ENCODE measurements at regions of chr4 and their contacts with region 1.

Region 1: GRCh38 chr4:47122592-47123291 is 91.4 kb downstream of the GABRB1 start:
- DNase-seq: peak; percentile 4
- H3K4me3 ChIP-seq: no peak overlapping the region
- H3K27me3 ChIP-seq: no peaks in the 10 kb centered on the region
- CTCF ChIP-seq: peak; percentile 93

Region 2: GRCh38 chr4:47088298-47088697 is 34.4 kb before region 1 on chr4:
- CTCF ChIA-PET with region 1: no interaction called
- POLR2A ChIA-PET with region 1: no interaction called
- DNase-seq: no peak
- H3K4me3 ChIP-seq: no peak overlapping the region
- H3K27me3 ChIP-seq: no peaks in the 10 kb centered on the region; the same call in 1 of the 2 replicates
- CTCF ChIP-seq: no peak

Region 3: DNA sequence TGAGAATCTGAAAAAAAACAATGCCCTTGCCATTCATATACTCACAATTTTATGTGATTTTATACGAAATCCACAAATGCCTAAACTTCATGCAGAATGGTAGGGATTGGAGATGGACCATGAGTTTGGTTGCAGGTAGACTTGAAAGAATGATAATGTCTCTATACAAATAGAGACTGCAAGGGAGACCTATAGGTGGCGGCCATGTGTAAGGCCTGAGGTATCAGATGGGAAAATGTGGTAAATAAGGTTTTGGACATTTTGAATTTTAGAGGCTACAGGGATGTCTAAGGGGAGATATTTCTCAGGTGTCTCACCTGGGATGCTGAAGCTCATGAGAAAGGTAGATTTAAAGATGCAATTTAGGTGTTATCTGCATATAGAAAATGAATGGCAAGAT is 13.4 kb before region 1 on chr4:
- CTCF ChIA-PET with region 1: interaction called, 23 read pairs
- POLR2A ChIA-PET with region 1: no interaction called
- DNase-seq: no peak
- H3K4me3 ChIP-seq: no peak overlapping the region
- H3K27me3 ChIP-seq: no peaks in the 10 kb centered on the region
- CTCF ChIP-seq: no peak

Region 4: DNA sequence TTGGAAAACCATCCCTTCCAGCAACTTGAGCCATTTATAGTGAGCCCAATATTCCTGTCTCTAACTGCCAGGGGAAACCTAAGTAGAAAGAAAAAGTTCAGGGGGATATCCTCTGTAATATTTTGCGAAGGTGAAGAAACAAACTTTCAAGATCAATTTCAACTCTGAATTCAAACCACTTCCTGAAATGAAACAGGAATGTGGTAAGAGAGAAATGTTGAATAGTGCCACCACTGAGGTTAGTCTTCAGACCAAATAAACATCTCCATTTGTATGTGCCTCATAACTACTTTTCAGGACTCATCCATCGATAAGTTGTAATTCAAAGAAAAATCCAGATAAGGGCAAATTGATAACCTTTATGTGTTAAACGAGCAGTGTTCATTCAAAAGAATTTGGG is 37.4 kb after region 1 on chr4:
- CTCF ChIA-PET with region 1: no interaction called
- POLR2A ChIA-PET with region 1: no interaction called
- DNase-seq: no peak
- H3K4me3 ChIP-seq: no peak overlapping the region
- H3K27me3 ChIP-seq: no peaks in the 10 kb centered on the region
- CTCF ChIP-seq: no peak

Measured in BJ (cell line).